ENCODE measurements at regions of chr2 and their contacts with region 1.

Region 1: GRCh38 chr2:46062637-46063412 is 234.4 kb upstream of the EPAS1 start:
- DNase-seq: peak; percentile 68
- H3K4me3 ChIP-seq: no peak overlapping the region
- H3K27ac ChIP-seq: no peak overlapping the region
- H3K4me1 ChIP-seq: no peaks in the 10 kb centered on the region
- CTCF ChIP-seq: peak; percentile 89

Region 2: GRCh38 chr2:46073540-46074018 is 10.8 kb after region 1 on chr2:
- CTCF ChIA-PET with region 1: no interaction called
- POLR2A ChIA-PET with region 1: no interaction called
- intact Hi-C with region 1: no loop called
- DNase-seq: no peak
- H3K4me3 ChIP-seq: no peak overlapping the region
- H3K27ac ChIP-seq: no peak overlapping the region
- H3K4me1 ChIP-seq: no peaks in the 10 kb centered on the region
- CTCF ChIP-seq: no peak

Region 3: GRCh38 chr2:46461011-46461674 is 398.3 kb after region 1 on chr2:
- CTCF ChIA-PET with region 1: no interaction called
- POLR2A ChIA-PET with region 1: no interaction called
- intact Hi-C with region 1: loop called (anchors 1 kb)
- DNase-seq: peak; percentile 71
- H3K4me3 ChIP-seq: peak overlapping the region; percentile 32
- H3K27ac ChIP-seq: peak overlapping the region; percentile 57
- H3K4me1 ChIP-seq: peaks cover 34% of the 10 kb centered on the region
- CTCF ChIP-seq: peak; percentile 99